Activated CD8-positive, alpha-beta T cell treated with anti-CD3 and anti-CD28 coated beads, Interleukin-2, amount 10 ng/mL, durations not matched to agents 7 days and 5 days (primary cell): ENCODE measurements at regions of chr6 and their contacts with region 1.

Region 1: GRCh38 chr6:33579828-33580714 is at the start of gene BAK1:
- DNase-seq: peak; percentile 93
- ATAC-seq: peak; percentile 93
- H3K4me3 Mint-ChIP-seq: peak within 1 kb of the TSS; percentile 98
- H3K27ac Mint-ChIP-seq: peak within 1 kb of the TSS; percentile 97
- H3K4me1 Mint-ChIP-seq: peaks cover 44% of the 10 kb centered on the region
- H3K27me3 Mint-ChIP-seq: no peaks in the 10 kb centered on the region
- total RNA-seq, gene BAK1: 76.0 to 76.2 TPM

Region 2: DNA sequence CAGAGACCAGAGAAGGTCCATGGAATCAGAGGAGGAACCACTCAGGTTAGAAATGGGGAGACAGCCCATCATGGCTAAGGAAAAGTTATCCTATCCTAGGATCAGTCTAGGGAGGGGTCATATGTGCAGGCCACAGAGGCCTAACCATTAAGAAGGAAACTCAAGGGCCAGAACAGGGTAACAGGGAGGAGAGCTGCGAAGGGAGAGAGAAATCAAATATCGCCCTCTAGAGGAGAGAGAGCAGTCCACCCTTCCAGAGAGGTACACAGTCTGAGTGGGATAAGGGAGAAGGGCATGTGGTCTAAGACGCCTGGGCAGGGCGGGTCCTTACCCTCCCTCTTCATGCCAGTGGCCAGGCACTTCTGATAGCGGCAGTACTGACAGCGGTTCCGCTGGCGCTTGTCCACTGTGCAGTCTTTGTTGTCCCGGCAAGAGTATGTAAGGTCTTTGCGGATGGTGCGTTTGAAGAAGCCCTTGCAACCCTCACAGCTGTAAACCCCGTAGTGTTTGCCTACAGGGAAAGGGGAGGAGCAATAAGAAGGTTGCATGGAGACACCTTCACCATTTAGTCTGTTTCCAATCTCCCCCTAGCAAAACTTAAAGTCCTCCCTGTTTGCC is 382.5 kb before region 1 on chr6:
- CTCF ChIA-PET with region 1: no interaction called
- POLR2A ChIA-PET with region 1: no interaction called
- DNase-seq: peak; percentile 55
- ATAC-seq: peak; percentile 40
- H3K4me3 Mint-ChIP-seq: no peak overlapping the region
- H3K27ac Mint-ChIP-seq: peak overlapping the region; percentile 0
- H3K4me1 Mint-ChIP-seq: peaks cover 47% of the 10 kb centered on the region
- H3K27me3 Mint-ChIP-seq: peaks cover 4% of the 10 kb centered on the region

Region 3: DNA sequence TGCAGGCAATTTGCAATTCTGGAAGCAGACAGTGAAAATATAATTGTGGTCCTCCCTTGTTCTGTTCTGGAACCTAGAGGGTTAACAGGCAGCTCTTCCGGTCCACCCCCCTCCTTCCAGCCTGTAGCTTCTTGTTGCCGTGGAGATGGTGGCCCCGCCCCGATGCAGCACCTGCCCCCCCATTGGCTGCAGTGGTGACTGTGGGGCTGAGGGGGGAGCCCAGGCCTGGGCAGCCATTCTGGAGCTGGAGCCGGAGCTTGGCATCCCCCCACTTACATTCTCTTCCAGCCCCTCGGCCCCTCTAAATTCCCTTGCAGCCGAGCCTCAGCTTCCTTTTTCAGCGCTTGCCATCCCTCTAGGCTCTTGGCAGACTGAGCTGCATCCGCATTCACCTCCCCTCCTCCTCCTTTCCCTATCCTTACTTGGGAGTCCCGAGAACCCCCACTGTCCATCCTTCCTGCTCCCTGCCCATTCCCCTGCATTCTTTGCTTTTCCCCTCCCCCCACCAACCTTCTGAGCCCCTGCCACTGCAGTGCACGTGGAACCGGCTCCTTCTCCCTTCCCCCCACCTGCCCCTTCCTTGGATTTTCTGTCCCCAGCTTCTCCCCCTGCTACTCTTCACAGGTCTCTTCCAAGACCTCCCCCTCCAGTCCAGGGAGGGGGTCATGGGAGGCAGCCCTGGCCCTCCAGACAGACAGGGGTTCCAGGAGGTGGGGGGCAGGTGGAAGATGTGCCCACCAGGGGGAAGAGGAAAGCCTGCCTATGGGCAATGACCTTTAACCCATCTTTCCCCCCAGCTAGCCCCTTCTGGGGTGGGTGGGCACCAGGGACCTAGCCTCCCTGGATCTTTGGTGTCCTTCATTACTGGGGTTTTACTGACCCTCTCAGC is 148.8 kb before region 1 on chr6:
- CTCF ChIA-PET with region 1: interaction called, 11 read pairs
- POLR2A ChIA-PET with region 1: interaction called, 10 read pairs
- DNase-seq: peak; percentile 93
- ATAC-seq: peak; percentile 67
- H3K4me3 Mint-ChIP-seq: peak overlapping the region; percentile 84
- H3K27ac Mint-ChIP-seq: peak overlapping the region; percentile 86
- H3K4me1 Mint-ChIP-seq: peaks cover 65% of the 10 kb centered on the region
- H3K27me3 Mint-ChIP-seq: no peaks in the 10 kb centered on the region

Region 4: DNA sequence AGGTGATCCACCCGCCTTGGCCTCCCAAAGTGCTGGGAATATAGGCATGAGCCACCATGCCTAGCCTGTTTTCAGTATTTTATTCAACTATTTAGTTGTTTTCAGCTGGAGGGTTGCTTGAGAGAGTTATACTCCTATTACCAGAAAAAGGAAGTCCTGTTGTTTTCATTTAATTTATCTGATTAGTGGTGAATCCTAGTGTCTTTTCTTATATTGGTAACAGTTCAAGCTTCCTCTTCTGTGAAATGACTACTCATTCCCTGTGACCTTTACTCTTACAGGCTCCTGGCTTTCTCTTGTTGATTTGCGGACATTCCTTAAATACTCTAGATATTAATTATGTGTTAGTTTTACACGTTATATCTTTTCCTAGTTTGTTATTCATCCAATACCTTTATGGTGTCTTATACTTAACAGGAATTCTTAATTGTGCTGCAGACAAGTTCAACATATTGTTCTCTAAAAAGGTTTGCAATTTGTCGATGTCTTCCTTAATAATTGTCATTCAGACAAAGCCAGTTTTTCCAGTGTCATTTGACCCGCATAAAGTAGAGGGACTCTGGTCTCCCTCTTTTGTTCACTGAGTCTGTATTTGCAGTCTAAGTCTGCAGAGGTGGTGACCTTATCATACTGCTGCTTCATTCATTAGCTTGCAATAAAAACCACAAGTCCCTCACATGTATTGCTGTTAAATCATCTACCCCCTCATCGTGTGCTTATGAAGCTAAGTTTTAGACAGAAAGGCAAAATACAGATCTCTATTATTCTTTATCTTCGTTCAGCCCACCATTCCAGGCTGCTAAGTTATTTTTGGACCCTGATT is 74.3 kb before region 1 on chr6:
- CTCF ChIA-PET with region 1: no interaction called
- POLR2A ChIA-PET with region 1: no interaction called
- DNase-seq: no peak
- ATAC-seq: no peak
- H3K4me3 Mint-ChIP-seq: no peak overlapping the region
- H3K27ac Mint-ChIP-seq: no peak overlapping the region
- H3K4me1 Mint-ChIP-seq: peaks cover 3% of the 10 kb centered on the region
- H3K27me3 Mint-ChIP-seq: peaks cover 15% of the 10 kb centered on the region

Region 5: GRCh38 chr6:33607784-33608161 is 27.7 kb after region 1 on chr6:
- CTCF ChIA-PET with region 1: interaction called, 11 read pairs
- POLR2A ChIA-PET with region 1: no interaction called
- DNase-seq: peak; percentile 63
- ATAC-seq: peak; percentile 77
- H3K4me3 Mint-ChIP-seq: no peak overlapping the region
- H3K27ac Mint-ChIP-seq: no peak overlapping the region
- H3K4me1 Mint-ChIP-seq: peaks cover 2% of the 10 kb centered on the region
- H3K27me3 Mint-ChIP-seq: peaks cover 17% of the 10 kb centered on the region

Region 6: DNA sequence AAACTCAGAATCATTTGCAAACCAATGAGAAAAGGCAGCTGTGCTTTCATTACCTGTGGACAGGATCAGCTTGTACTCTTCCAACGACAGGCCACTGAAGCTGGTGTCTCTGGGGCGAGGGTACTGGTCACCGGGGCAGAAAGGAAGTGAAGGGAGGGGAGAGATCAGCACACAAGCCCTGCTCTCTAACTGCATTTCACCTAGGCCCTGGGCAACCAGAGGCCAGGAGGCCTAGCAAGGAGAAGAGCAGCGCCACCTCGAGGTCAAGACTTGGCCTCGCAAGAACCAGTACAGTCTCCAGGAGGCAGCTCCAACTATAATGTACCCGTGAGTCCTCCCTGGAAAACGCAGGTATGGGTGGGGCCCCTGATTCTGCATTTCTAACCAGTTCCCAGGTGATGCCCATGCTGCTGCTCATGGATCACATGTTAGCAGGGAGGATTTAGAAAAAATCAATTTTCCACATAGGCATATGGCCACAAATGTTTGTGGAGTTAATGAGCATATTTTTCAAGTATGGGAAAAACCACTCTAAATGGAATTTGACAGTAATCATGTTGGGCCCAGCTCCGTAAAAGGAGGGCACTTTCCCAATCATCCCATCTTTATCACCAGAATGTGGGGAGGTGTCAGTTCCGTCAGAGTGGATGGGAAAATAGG is 120.5 kb after region 1 on chr6:
- CTCF ChIA-PET with region 1: interaction called, 44 read pairs
- POLR2A ChIA-PET with region 1: interaction called, 5 read pairs
- DNase-seq: peak; percentile 87
- ATAC-seq: peak; percentile 76
- H3K4me3 Mint-ChIP-seq: no peak overlapping the region
- H3K27ac Mint-ChIP-seq: peak overlapping the region; percentile 40
- H3K4me1 Mint-ChIP-seq: peaks cover 49% of the 10 kb centered on the region
- H3K27me3 Mint-ChIP-seq: no peaks in the 10 kb centered on the region